H1 (cell line): ENCODE measurements at regions of chr19 and their contacts with region 1.

Region 1: DNA sequence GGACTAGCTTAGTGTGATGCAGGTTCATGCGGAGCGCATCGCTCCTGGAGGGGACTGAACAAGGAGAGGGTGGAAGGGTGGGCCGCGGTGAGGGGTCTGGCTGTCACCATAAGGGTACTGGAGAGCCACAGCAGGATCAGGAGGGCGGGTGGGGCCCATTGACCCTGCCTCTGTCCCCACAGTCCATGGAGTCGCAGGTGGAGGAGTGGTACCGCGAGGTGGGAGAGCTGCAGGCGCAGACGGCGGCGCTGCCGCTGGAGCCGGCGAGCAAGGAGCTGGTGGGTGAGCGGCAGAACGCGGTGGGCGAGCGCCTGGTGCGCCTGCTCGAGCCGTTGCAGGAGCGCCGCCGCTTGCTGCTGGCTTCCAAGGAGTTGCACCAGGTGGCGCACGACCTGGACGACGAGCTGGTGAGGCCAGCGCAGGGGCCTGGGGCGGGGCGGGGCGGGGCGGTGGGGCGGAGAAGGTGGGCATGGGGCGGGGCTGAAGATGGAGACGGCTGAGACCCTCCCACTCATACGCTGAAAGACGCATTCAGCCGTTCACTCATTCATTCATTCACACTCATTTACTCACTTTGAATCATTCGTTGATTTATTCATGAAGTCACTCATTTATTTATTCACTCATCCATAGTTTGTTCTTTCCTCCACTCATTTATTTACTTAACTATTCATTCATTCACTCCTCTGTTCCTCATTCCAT is 27.5 kb upstream of the SHKBP1 start:
- DNase-seq: peak; percentile 73 to 92
- H3K4me3 ChIP-seq: peak overlapping the region in 3 of 4 experiments; percentile 31 to 49 (median 40); a peak in 7 of 8 replicates
- H3K27ac ChIP-seq: no peak overlapping the region
- H3K4me1 ChIP-seq: peaks cover 0 to 1% (median 0%) of the 10 kb centered on the region in 4 experiments; a peak in 3 of 7 replicates
- H3K27me3 ChIP-seq: peaks cover 0 to 26% (median 24%) of the 10 kb centered on the region in 4 experiments; a peak in 6 of 7 replicates
- CTCF ChIP-seq: peak; percentile 66 to 81 (median 80)
- EP300 ChIP-seq: no peak
- POLR2A ChIP-seq: no peak
- RAD21 ChIP-seq: peak; percentile 45 to 59

Region 2: GRCh38 chr19:40457953-40458596 is 91.1 kb before region 1 on chr19:
- CTCF ChIA-PET with region 1: no interaction called
- POLR2A ChIA-PET with region 1: no interaction called
- DNase-seq: no peak
- H3K4me3 ChIP-seq: no peak overlapping the region
- H3K27ac ChIP-seq: no peak overlapping the region
- H3K4me1 ChIP-seq: no peaks in the 10 kb centered on the region
- H3K27me3 ChIP-seq: no peaks in the 10 kb centered on the region; a peak in 1 of 7 replicates
- CTCF ChIP-seq: no peak
- EP300 ChIP-seq: no peak
- POLR2A ChIP-seq: no peak
- RAD21 ChIP-seq: no peak

Region 3: DNA sequence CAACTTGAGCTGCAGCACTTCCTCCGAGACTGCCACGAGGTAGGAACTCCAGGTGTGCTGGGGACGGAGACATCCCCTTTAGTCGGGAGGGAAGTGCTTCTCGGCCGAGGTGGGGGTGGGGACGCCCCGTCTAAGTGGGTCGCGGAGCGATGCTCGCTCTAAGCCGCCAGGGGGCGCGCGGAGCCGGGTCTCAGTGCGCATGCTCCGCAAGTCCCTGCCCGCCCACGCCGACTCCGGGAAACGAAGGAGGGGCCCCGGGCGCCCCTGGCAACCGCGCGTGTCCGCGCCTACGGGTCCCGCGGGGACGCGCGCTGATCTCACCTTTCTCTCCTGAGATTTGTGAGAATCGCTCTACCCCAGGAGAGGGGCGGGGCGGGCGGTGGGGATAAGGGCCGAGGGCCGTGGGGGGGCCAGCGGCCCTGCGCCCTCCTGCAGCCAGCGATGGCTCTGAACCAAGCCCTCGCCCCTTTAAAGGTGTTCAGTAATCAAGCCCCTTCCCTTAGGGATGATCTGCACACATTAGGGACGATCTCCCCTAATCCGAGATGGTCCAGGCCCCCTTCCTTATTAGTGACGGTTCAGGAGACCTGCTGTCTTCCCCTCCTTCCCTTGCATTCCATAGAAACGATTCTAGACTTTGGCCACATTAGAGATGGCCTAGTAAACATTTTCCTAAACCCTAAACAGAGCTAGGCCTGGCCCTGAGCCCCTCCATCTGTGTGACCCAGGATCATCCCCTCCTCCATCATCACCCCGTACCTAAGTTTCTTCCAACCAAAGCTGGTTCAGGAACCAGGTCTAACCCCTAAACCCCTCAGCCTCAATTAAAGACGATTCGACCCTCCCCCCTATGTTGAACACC is 19.8 kb before region 1 on chr19:
- CTCF ChIA-PET with region 1: interaction called, 95 read pairs
- POLR2A ChIA-PET with region 1: interaction called, 3 read pairs
- DNase-seq: peak; percentile 80 to 96
- H3K4me3 ChIP-seq: peak overlapping the region; percentile 24 to 62 (median 44); a peak in 7 of 8 replicates
- H3K27ac ChIP-seq: no peak overlapping the region
- H3K4me1 ChIP-seq: peaks cover 0 to 7% (median 4%) of the 10 kb centered on the region in 4 experiments; a peak in 6 of 7 replicates
- H3K27me3 ChIP-seq: peaks cover 0 to 4% (median 0%) of the 10 kb centered on the region in 4 experiments; a peak in 2 of 7 replicates
- CTCF ChIP-seq: peak; percentile 87 to 96 (median 93)
- EP300 ChIP-seq: no peak
- POLR2A ChIP-seq: no peak
- RAD21 ChIP-seq: peak; percentile 35 to 39; a peak in 2 of 4 replicates

Region 4: DNA sequence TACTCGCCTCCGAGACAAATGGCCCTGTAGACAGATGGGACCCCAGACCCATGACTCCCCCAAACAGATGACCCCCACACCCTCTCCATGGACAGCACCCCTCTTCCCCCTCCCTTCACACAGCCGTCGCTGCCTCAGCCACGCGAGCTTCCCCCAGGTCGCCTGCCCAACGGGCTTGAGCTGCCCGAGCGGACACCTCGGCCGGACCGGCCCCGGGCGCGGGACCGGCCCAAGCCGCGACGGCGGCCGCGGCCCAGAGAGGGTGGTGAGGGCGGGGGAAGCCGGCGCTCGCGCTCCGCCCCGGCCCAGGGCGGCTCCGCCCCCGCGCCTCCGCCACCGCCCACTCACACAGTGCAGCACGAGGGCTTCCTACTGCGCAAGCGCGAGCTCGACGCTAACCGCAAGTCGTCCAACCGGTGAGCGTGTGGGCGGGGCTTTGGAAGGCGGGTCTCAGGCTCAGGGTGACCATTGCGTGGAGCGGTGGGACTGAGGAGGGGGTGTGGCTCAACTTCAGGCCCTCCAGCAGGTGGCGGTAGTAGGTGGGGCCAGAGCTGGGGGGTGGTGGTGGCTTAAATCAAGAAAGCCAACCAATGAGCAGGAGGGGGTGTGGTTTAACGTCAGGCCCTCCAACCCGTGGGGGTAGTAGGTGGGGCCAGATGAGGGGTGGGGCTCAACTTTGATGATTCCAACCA is 21.3 kb after region 1 on chr19:
- CTCF ChIA-PET with region 1: interaction called, 11 read pairs
- POLR2A ChIA-PET with region 1: interaction called, 5 read pairs
- DNase-seq: peak; percentile 99 to 100
- H3K4me3 ChIP-seq: peak overlapping the region; percentile 42 to 74 (median 45)
- H3K27ac ChIP-seq: no peak overlapping the region
- H3K4me1 ChIP-seq: peaks cover 2 to 13% (median 4%) of the 10 kb centered on the region in 4 experiments
- H3K27me3 ChIP-seq: peaks cover 32 to 49% (median 46%) of the 10 kb centered on the region in 4 experiments
- CTCF ChIP-seq: peak; percentile 42 to 62 (median 58)
- EP300 ChIP-seq: no peak
- POLR2A ChIP-seq: no peak
- RAD21 ChIP-seq: peak; percentile 17 to 36; a peak in 2 of 4 replicates

Region 5: DNA sequence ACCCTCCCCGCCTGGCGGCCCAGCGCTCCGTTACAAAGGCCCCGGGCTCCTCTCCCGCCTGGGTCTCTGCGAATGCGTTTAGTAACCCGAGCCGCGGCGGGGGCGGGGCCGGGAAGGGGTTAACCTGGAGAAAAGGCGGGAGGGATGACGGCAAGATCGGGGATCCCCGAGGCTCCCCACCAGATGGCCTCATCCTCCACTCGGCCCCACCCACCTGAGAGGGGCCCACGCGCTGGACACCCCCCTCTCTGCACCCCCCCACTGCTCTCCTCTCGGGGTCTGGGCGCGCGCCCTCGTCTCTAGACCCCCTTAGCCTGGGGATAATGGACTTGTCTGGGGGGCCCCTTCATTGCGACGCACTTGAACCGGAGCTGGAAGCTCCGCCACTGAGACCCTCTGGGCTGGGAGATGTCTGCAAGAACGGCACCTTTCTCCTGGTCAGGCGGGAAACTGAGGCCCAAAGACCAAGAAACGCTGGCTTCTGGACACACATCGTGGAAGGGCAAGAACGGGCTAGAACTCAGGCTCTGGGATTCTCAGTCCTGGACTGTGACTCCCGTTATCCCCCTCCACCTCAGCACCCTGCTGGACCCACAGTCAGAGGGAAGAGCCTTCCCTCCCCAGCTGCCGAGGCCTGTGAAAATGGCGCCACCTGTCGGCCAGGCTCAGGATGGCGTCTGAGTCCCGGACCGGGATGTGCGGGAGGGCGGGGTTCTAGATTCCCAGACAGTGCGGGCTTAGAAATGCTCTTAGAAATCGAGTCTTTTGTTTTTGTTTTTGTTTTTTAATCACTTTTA is 49.2 kb after region 1 on chr19:
- CTCF ChIA-PET with region 1: interaction called, 35 read pairs
- POLR2A ChIA-PET with region 1: interaction called, 3 read pairs
- DNase-seq: peak in 1 of 2 experiments; percentile 97
- H3K4me3 ChIP-seq: peak overlapping the region; percentile 38 to 69 (median 64)
- H3K27ac ChIP-seq: peak overlapping the region; percentile 78
- H3K4me1 ChIP-seq: peaks cover 9 to 33% (median 21%) of the 10 kb centered on the region in 4 experiments
- H3K27me3 ChIP-seq: peaks cover 19 to 47% (median 42%) of the 10 kb centered on the region in 4 experiments
- CTCF ChIP-seq: peak; percentile 95 to 98 (median 97)
- EP300 ChIP-seq: peak in 1 of 2 experiments; percentile 97; a peak in 2 of 3 replicates
- POLR2A ChIP-seq: peak in 1 of 2 experiments; percentile 47; a peak in 1 of 3 replicates
- RAD21 ChIP-seq: peak; percentile 81 to 89

Region 6: GRCh38 chr19:40613640-40614303 is 64.6 kb after region 1 on chr19:
- CTCF ChIA-PET with region 1: no interaction called
- POLR2A ChIA-PET with region 1: no interaction called
- DNase-seq: peak in 1 of 2 experiments; percentile 88
- H3K4me3 ChIP-seq: peak overlapping the region; percentile 71 to 94 (median 86)
- H3K27ac ChIP-seq: peak overlapping the region; percentile 43; the same call in 1 of the 2 replicates
- H3K4me1 ChIP-seq: peaks cover 3 to 13% (median 9%) of the 10 kb centered on the region in 4 experiments; a peak in 6 of 7 replicates
- H3K27me3 ChIP-seq: peaks cover 2 to 33% (median 31%) of the 10 kb centered on the region in 4 experiments
- CTCF ChIP-seq: no peak
- EP300 ChIP-seq: no peak
- POLR2A ChIP-seq: peak in 1 of 2 experiments; percentile 75; a peak in 2 of 3 replicates
- RAD21 ChIP-seq: no peak